Esophagus muscularis mucosa (tissue), 4 donors: ENCODE measurements at regions of chr10 and their contacts with region 1.

Region 1: GRCh38 chr10:52308251-52309031 is 5.6 kb upstream of the DKK1 start:
- DNase-seq: no peak
- H3K4me3 ChIP-seq: peak overlapping the region; percentile 49 to 61 (median 50)
- H3K27ac ChIP-seq: no peak overlapping the region
- H3K4me1 ChIP-seq: peaks cover 6 to 19% (median 13%) of the 10 kb centered on the region in 4 donors
- H3K27me3 ChIP-seq: peaks cover 0 to 46% (median 3%) of the 10 kb centered on the region in 4 donors
- CTCF ChIP-seq: peak; percentile 56 to 70 (median 63)
- EP300 ChIP-seq: no peak
- POLR2A ChIP-seq: no peak

Region 2: GRCh38 chr10:52256832-52257691 is 51.4 kb before region 1 on chr10:
- intact Hi-C with region 1: no loop called
- DNase-seq: no peak
- H3K4me3 ChIP-seq: no peak overlapping the region
- H3K27ac ChIP-seq: no peak overlapping the region
- H3K4me1 ChIP-seq: peaks cover 5 to 22% (median 10%) of the 10 kb centered on the region in 4 donors
- H3K27me3 ChIP-seq: no peaks in the 10 kb centered on the region
- CTCF ChIP-seq: no peak
- EP300 ChIP-seq: no peak
- POLR2A ChIP-seq: no peak

Region 3: GRCh38 chr10:52400564-52400963 is 92.1 kb after region 1 on chr10:
- intact Hi-C with region 1: no loop called
- DNase-seq: no peak
- H3K4me3 ChIP-seq: no peak overlapping the region
- H3K27ac ChIP-seq: no peak overlapping the region
- H3K4me1 ChIP-seq: no peaks in the 10 kb centered on the region
- H3K27me3 ChIP-seq: no peaks in the 10 kb centered on the region
- CTCF ChIP-seq: no peak
- EP300 ChIP-seq: no peak
- POLR2A ChIP-seq: no peak

Region 4: GRCh38 chr10:52488606-52489485 is 180.4 kb after region 1 on chr10:
- intact Hi-C with region 1: loop called (anchors 5 kb)
- DNase-seq: no peak
- H3K4me3 ChIP-seq: no peak overlapping the region
- H3K27ac ChIP-seq: no peak overlapping the region
- H3K4me1 ChIP-seq: no peaks in the 10 kb centered on the region
- H3K27me3 ChIP-seq: no peaks in the 10 kb centered on the region
- CTCF ChIP-seq: peak; percentile 38 to 57 (median 49)
- EP300 ChIP-seq: no peak
- POLR2A ChIP-seq: no peak